HepG2 (cell line): ENCODE measurements at regions of chr16 and their contacts with region 1.

Region 1: GRCh38 chr16:75555707-75556430 is at the start of gene TMEM231:
- DNase-seq: peak; percentile 91
- ATAC-seq: peak; percentile 94
- H3K4me3 ChIP-seq: peak within 1 kb of the TSS; percentile 68 to 85 (median 70)
- H3K27ac ChIP-seq: peak within 1 kb of the TSS; percentile 32
- H3K4me1 ChIP-seq: peaks cover 28% of the 10 kb centered on the region
- H3K27me3 ChIP-seq: peaks cover 0 to 12% of the 10 kb centered on the region in 2 experiments; a peak in 2 of 5 replicates
- CTCF ChIP-seq: no peak; the same call in none of the 2 replicates
- EP300 ChIP-seq: no peak
- POLR2A ChIP-seq: peak; percentile 28 to 31; a peak in 2 of 4 replicates
- RAD21 ChIP-seq: 0 out of 2 replicates have a peak, but pooled peaks have one; percentile 17
- total RNA-seq, gene TMEM231: 2.3 and 3.5 TPM in 2 replicates

Region 2: DNA sequence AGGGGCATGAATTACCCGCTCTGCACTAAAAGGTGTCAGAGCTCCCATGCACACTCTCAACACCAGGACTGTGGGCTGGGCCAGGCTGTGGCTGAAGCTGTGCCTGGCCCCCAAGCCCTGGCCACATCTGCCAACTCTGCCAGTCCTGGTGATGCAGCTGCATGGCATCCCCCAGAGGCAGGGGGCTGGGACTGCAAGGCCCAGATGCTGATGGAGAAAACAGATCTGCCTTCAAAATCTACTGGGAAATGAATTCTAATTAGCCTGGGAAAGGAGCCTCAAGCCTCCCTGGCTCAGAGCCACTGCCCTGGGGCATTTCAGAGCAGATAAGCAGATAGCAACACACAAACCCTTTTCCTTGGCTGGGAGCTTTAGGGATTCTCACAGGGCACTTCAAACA is 64.0 kb before region 1 on chr16:
- CTCF ChIA-PET with region 1: no interaction called
- POLR2A ChIA-PET with region 1: no interaction called
- in situ Hi-C with region 1: no loop called
- intact Hi-C with region 1: no loop called
- DNase-seq: no peak
- ATAC-seq: peak; percentile 22
- H3K4me3 ChIP-seq: no peak overlapping the region
- H3K27ac ChIP-seq: no peak overlapping the region
- H3K4me1 ChIP-seq: peaks cover 46% of the 10 kb centered on the region
- H3K27me3 ChIP-seq: peaks cover 0 to 22% of the 10 kb centered on the region in 2 experiments; a peak in 2 of 5 replicates
- CTCF ChIP-seq: no peak
- EP300 ChIP-seq: no peak
- POLR2A ChIP-seq: no peak
- RAD21 ChIP-seq: no peak

Region 3: GRCh38 chr16:75566040-75566810 is 10.4 kb after region 1 on chr16 and contains the start of gene GABARAPL2:
- CTCF ChIA-PET with region 1: no interaction called
- POLR2A ChIA-PET with region 1: interaction called, 27 read pairs
- in situ Hi-C with region 1: no loop called
- intact Hi-C with region 1: loop called (anchors 1 kb)
- DNase-seq: peak; percentile 70
- ATAC-seq: peak; percentile 86
- H3K4me3 ChIP-seq: peak within 1 kb of the TSS; percentile 87 to 96 (median 88)
- H3K27ac ChIP-seq: peak within 1 kb of the TSS; percentile 34
- H3K4me1 ChIP-seq: peaks cover 28% of the 10 kb centered on the region
- H3K27me3 ChIP-seq: peaks cover 0 to 4% of the 10 kb centered on the region in 2 experiments; a peak in 2 of 5 replicates
- CTCF ChIP-seq: no peak; the same call in 1 of the 2 replicates
- EP300 ChIP-seq: no peak; a peak in 1 of 4 replicates
- POLR2A ChIP-seq: peak; percentile 16 to 81; a peak in 2 of 4 replicates
- RAD21 ChIP-seq: peak; percentile 33; the same call in 1 of the 2 replicates
- total RNA-seq, gene GABARAPL2: 76.4 and 82.4 TPM in 2 replicates

Region 4: GRCh38 chr16:75593825-75594820 is 38.3 kb after region 1 on chr16:
- CTCF ChIA-PET with region 1: no interaction called
- POLR2A ChIA-PET with region 1: no interaction called
- in situ Hi-C with region 1: no loop called
- intact Hi-C with region 1: loop called (anchors 5 kb)
- DNase-seq: peak; percentile 87
- ATAC-seq: peak; percentile 97
- H3K4me3 ChIP-seq: peak overlapping the region in 2 of 3 experiments; percentile 10 to 42; a peak in 3 of 6 replicates
- H3K27ac ChIP-seq: peak overlapping the region; percentile 72
- H3K4me1 ChIP-seq: peaks cover 20% of the 10 kb centered on the region
- H3K27me3 ChIP-seq: no peaks in the 10 kb centered on the region
- CTCF ChIP-seq: 0 out of 2 replicates have a peak, but pooled peaks have one; percentile 3
- EP300 ChIP-seq: peak in 1 of 2 experiments; percentile 34; a peak in 2 of 4 replicates
- POLR2A ChIP-seq: no peak
- RAD21 ChIP-seq: no peak